Panc1 (cell line): ENCODE measurements at regions of chr7 and their contacts with region 1.

Region 1: GRCh38 chr7:112206238-112207044 is at the starts of genes DOCK4 and ZNF277:
- DNase-seq: peak; percentile 99
- ATAC-seq: peak; percentile 96
- H3K4me3 ChIP-seq: peak within 1 kb of the TSS; percentile 76 to 95
- H3K27ac ChIP-seq: peak within 1 kb of the TSS; percentile 81
- H3K4me1 ChIP-seq: peaks cover 8% of the 10 kb centered on the region
- H3K27me3 ChIP-seq: no peaks in the 10 kb centered on the region
- CTCF ChIP-seq: no peak
- total RNA-seq, gene DOCK4: 10.8 TPM
- total RNA-seq, gene ZNF277: 12.8 TPM

Region 2: DNA sequence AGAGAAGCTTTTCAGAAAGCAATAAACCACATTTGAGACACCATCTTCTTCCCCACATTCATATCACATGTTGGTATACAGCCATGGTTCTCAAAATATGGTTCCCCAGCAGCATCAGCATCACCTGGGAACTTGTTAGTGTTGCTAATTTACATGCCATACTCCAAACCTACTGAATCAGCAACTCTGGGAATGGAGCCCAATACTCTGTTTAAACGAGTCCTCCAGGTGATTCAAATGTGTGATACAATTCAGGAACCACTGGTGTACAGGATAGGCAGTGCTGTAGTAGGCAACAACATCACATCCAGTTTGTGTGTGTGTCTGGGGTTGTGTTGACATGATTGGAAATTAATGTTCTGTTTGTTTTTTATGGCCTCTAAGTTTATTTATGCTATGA is 47.7 kb after region 1 on chr7:
- CTCF ChIA-PET with region 1: no interaction called
- POLR2A ChIA-PET with region 1: no interaction called
- in situ Hi-C with region 1: no loop called
- intact Hi-C with region 1: no loop called
- DNase-seq: no peak
- ATAC-seq: no peak
- H3K4me3 ChIP-seq: no peak overlapping the region
- H3K27ac ChIP-seq: no peak overlapping the region
- H3K4me1 ChIP-seq: no peaks in the 10 kb centered on the region; the same call in 1 of the 2 replicates
- H3K27me3 ChIP-seq: no peaks in the 10 kb centered on the region
- CTCF ChIP-seq: no peak

Region 3: DNA sequence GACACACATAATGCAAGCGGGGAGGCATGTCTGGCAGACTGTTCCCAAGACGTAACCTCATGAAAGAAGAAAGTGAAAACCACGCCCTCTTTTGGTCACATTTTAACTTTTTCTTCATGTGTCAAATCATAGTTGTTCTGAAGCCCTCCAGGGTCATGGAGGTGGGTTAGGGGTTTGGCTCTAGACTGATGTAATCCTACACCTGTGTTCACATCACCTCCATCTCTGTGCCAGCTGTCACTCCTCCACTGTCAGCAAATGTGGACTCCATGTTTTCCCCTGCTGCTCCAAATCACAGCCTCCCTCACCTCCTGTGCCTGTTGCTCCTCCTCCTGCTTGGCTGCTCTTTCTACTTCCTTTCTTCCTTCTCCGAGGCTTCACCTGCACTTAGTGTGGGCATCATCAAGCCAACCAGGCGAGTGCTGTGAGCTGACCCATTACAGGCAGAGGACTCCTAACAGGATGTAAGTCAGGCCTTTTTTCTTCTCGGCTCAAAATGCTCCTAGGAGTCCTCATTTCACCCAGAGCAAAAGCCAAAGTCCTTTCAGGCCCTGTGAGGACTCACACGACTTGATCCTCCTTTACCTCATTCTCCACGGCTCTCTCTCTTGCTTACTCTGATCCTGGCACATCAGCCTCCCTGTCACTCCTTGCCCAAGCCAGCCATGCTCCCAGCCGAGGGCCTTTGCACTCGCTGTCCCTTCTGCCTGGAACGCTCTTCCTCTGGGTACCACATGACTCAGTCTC is 177.4 kb after region 1 on chr7:
- CTCF ChIA-PET with region 1: no interaction called
- POLR2A ChIA-PET with region 1: no interaction called
- in situ Hi-C with region 1: no loop called
- intact Hi-C with region 1: loop called (anchors 10 kb)
- DNase-seq: peak; percentile 18
- ATAC-seq: no peak
- H3K4me3 ChIP-seq: no peak overlapping the region
- H3K27ac ChIP-seq: no peak overlapping the region
- H3K4me1 ChIP-seq: no peaks in the 10 kb centered on the region
- H3K27me3 ChIP-seq: no peaks in the 10 kb centered on the region; the same call in 1 of the 2 replicates
- CTCF ChIP-seq: peak; percentile 21; the same call in 1 of the 2 replicates